HCT116 (cell line): ENCODE measurements at regions of chr5 and their contacts with region 1.

Region 1: DNA sequence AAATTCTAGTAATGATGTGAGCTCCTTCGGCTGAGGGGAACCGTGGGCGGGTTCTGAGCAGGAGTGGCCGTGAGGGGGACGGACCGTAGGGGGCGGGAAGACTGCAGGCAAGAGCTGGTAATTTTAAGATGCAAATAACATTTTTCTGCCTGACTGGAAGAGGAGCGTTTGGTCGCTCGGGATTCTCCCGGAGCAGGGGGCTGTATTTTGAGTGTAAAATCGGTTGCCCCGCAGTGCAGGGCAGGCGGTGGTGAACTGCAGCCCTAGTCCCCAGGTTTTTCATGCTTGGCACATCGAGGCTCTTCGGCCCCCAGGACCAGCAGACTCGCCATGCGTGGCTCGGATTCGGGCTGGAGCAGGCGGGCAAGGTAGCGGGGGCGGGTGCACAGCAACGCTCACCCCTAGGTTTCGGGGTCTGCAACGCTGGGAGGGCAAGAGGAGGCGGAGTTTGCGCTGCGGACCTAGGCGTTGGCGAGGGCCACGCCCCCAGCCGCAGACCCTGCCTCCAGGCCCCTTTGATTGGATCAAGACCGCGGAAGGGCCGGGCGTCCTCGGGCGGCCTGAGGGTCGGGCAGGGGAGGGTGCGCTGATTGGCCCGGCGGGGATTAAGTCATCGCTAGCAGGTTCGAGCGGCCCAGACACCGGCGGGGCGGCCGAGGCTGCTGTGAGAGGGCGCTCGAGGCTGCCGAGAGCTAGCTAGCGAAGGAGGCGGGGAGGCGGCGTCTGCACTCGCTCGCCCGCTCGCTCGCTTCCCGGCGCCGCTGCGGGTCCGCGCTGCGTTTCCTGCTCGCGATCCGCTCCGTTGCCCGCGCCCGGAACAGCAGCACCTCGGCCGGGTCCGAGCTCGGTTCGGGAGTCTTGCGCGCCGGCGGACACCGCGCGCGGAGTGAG is at the start of gene ARHGAP26:
- DNase-seq: peak; percentile 89
- ATAC-seq: peak; percentile 96
- H3K4me3 ChIP-seq: peak within 1 kb of the TSS; percentile 58 to 83
- H3K27ac ChIP-seq: peak within 1 kb of the TSS; percentile 63
- H3K4me1 ChIP-seq: peaks cover 16 to 27% of the 10 kb centered on the region in 2 experiments
- H3K27me3 ChIP-seq: no peaks in the 10 kb centered on the region
- CTCF ChIP-seq: 0 out of 6 replicates have a peak, but pooled peaks of 1 of the 3 experiments have one; percentile 14
- POLR2A ChIP-seq: peak; percentile 60
- RAD21 ChIP-seq: peak; percentile 53
- total RNA-seq, gene ARHGAP26: 34.5 TPM

Region 2: DNA sequence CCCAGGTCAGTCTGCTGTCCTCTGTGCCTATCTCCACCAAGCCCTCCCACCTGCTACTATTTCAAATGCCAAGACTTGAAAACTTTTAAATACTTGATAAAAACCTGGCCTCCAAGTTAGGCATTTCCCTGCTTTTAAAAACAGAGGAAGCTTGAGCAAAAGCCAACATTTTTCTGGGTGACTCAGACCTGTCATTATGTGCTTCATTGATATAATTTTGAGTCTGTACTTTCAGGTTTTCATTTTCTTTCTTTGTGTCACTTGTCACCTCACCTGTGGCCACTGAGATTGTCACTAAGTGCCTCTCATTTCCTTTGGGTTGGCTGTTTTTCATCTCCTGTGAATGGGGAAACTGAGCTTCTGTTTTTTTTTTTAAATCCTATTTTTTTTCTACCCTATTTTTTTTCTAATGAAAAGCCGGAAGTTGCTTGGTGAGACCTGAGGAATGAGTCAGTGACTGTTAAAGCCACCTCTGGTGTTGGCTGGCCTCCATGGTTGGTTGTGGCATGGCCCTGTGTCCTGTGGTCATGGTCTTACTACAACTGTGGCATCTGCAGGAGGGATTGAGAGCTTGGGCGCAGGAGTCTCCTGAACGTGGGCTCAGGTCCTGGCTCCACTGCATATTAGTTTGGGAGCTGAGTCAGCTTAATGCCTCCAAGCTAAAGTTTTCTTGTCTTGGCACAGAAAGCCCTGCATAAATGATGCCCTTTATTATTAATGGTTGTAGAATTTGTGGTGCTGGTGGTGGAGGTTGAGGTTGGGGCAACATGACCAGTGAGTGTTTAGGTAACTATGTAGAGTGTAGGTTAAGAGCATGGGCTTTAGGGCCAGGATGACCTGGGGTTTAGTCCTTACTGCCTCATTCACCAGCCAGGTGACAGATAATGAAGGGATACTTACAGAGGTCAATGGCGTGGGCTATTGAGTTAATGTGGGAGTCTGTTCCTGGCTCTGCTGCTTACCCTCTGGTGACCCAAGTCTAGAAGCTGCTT is 57.1 kb after region 1 on chr5:
- CTCF ChIA-PET with region 1: interaction called, 4 read pairs
- POLR2A ChIA-PET with region 1: no interaction called
- RAD21 ChIA-PET with region 1: no interaction called
- intact Hi-C with region 1: loop called (anchors 2 kb)
- DNase-seq: peak; percentile 87
- ATAC-seq: peak; percentile 59
- H3K4me3 ChIP-seq: peak overlapping the region; percentile 10 to 51
- H3K27ac ChIP-seq: peak overlapping the region; percentile 90
- H3K4me1 ChIP-seq: peaks cover 90 to 98% of the 10 kb centered on the region in 2 experiments
- H3K27me3 ChIP-seq: no peaks in the 10 kb centered on the region
- CTCF ChIP-seq: no peak
- POLR2A ChIP-seq: no peak
- RAD21 ChIP-seq: no peak

Region 3: GRCh38 chr5:142865414-142866045 is 95.5 kb after region 1 on chr5:
- CTCF ChIA-PET with region 1: interaction called, 19 read pairs
- POLR2A ChIA-PET with region 1: no interaction called
- RAD21 ChIA-PET with region 1: interaction called, 4 to 9 read pairs
- intact Hi-C with region 1: loop called (anchors 2 kb)
- DNase-seq: no peak
- ATAC-seq: no peak
- H3K4me3 ChIP-seq: no peak overlapping the region
- H3K27ac ChIP-seq: no peak overlapping the region
- H3K4me1 ChIP-seq: peaks cover 39 to 49% of the 10 kb centered on the region in 2 experiments; a peak in 3 of 4 replicates
- H3K27me3 ChIP-seq: no peaks in the 10 kb centered on the region
- CTCF ChIP-seq: no peak
- POLR2A ChIP-seq: no peak
- RAD21 ChIP-seq: no peak